Panc1 (cell line): ENCODE measurements at regions of chr16 and their contacts with region 1.

Region 1: DNA sequence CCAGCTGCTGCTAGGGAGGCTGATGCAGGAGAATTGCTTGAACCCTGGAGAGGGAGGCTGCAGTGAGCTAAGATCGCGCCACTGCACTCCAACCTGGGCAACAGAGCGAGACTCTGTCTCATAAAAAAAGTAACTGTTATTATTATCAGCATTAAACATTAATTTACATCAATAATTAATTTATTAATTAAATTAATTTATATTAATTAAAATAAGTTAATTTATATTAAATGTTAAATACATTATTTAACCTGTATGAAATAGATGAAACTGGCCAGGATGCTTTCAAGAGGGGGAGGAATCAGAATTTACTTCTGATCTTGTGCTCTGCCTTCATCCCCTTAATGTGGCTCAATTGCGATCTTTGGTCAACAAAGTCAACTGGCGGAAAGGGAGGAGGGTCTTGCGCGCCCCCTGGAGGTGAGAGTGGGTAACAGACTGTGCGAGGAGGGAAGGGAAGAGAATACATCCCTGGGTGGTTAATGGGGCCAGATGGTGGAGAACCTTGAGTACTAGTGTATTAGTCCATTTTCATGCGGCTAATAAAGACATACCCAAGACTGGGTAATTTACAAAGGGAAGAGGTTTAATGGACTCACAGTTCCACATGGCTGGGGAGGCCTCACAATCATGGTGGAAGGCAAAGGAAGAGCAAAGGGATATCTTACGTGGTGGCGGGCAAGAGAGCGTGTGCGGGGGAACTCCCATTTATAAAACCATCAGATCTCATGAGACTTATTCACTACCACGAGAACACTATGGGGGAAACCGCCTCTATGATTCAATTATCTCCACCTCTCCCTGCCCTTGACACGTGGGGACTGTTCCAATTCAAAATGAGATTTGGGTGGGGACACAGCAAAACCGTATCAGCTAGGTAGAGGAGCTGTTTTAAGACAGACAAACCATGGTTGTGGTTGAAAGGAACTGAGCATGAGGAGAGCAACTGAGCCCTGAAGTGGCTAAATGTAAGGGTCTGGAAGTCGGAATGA is 15.7 kb upstream of the CPPED1 start:
- DNase-seq: peak; percentile 8
- ATAC-seq: peak; percentile 69; the same call in 1 of the 2 replicates
- H3K4me3 ChIP-seq: no peak overlapping the region
- H3K27ac ChIP-seq: no peak overlapping the region
- H3K4me1 ChIP-seq: no peaks in the 10 kb centered on the region
- H3K27me3 ChIP-seq: no peaks in the 10 kb centered on the region
- CTCF ChIP-seq: peak; percentile 89

Region 2: DNA sequence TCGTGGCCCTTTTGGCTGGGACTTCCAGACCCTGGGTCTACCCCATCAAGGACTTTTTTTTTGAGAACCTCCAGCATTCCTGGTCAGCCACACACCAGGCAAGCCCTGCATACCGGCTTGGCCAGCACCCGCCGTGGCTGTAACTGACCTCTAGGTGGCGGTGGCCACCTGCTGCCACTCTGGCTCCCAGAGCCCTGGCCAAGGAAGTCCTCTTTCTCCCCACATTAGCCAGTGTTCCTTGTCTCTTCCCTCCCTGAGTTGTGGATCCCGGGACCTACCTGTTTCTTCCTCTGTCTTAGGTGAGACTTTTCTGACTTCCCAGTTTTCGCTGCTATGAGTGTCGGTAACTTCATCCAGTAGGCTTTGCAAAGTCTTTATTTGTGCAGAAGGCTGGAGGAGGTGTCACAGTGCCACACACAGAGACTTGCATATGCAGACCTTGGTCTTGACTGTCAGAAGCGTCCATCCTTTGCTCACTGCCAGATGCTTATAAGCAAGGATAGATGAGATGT is 364.1 kb before region 1 on chr16:
- CTCF ChIA-PET with region 1: no interaction called
- POLR2A ChIA-PET with region 1: no interaction called
- in situ Hi-C with region 1: no loop called
- intact Hi-C with region 1: loop called (anchors 5 kb)
- DNase-seq: peak; percentile 24
- ATAC-seq: peak; percentile 98
- H3K4me3 ChIP-seq: no peak overlapping the region
- H3K27ac ChIP-seq: no peak overlapping the region
- H3K4me1 ChIP-seq: no peaks in the 10 kb centered on the region
- H3K27me3 ChIP-seq: no peaks in the 10 kb centered on the region
- CTCF ChIP-seq: peak; percentile 99

Region 3: GRCh38 chr16:12573730-12574383 is 245.6 kb before region 1 on chr16:
- CTCF ChIA-PET with region 1: no interaction called
- POLR2A ChIA-PET with region 1: no interaction called
- in situ Hi-C with region 1: no loop called
- intact Hi-C with region 1: loop called (anchors 5 kb)
- DNase-seq: peak; percentile 18
- ATAC-seq: peak; percentile 67; the same call in 1 of the 2 replicates
- H3K4me3 ChIP-seq: no peak overlapping the region
- H3K27ac ChIP-seq: no peak overlapping the region
- H3K4me1 ChIP-seq: no peaks in the 10 kb centered on the region
- H3K27me3 ChIP-seq: no peaks in the 10 kb centered on the region
- CTCF ChIP-seq: peak; percentile 89